Activated CD4-positive, alpha-beta memory T cell treated with anti-CD3 and anti-CD28 coated beads for 36 hours (primary cell): ENCODE measurements at regions of chr15 and their contacts with region 1.

Region 1: GRCh38 chr15:82985688-82986441 is at the start of gene RAMAC:
- DNase-seq: peak; percentile 95
- H3K4me3 Mint-ChIP-seq: peak within 1 kb of the TSS; percentile 98
- H3K27ac Mint-ChIP-seq: peak within 1 kb of the TSS; percentile 96
- H3K4me1 Mint-ChIP-seq: peaks cover 18% of the 10 kb centered on the region
- H3K27me3 Mint-ChIP-seq: no peaks in the 10 kb centered on the region
- total RNA-seq, gene RAMAC: 19.0 to 20.2 TPM

Region 2: DNA sequence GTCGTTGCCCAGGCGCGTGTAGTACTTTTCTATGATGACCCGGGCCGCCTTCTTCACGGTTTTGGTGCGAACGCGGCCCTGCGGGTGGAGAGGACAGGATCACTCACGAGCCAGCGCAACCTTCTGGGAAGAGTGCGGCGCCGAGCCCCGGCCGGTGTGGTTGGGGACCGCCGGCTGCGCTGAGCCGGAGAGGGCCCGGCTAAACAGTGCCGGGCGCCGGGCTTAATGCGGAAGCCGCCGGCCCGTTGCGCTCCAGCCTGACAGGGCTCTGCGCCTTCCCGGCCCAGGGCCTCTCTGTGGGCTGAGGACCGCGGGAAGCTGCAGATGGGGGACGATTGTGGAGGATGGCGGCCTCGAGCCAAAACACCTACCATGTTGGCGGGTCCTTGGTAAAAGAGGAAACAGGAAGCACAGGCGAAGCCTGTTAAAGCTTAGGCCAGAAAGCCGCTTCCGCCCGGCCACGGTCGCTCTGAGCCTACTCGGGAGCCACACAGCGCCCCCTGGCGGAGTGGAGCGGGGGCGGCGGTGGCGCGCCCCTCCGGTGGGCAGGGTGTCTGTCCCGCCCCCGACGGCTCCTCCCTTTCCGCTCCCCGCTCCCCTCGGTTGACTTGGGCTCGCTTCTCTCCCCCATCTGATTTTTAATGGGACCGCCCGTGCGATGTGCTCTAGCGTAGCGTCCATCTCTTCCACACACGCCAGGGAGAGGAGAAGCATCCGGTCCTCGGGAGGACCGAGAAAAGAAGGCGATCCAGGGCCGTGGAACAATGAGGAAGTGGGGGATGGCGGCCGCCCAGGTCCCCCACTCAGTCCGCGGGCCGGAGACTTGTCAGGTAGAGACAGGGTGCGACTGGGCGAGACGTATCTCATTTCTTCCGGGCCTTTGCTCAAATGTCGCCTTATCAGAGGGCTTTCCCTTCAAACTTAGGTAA is 445.5 kb before region 1 on chr15 and contains the start of gene RPS17:
- CTCF ChIA-PET with region 1: interaction called, 3 read pairs
- POLR2A ChIA-PET with region 1: interaction called, 7 read pairs
- intact Hi-C with region 1: loop called (anchors 1 kb)
- DNase-seq: peak; percentile 98
- H3K4me3 Mint-ChIP-seq: peak within 1 kb of the TSS; percentile 98
- H3K27ac Mint-ChIP-seq: peak within 1 kb of the TSS; percentile 88
- H3K4me1 Mint-ChIP-seq: peaks cover 27% of the 10 kb centered on the region
- H3K27me3 Mint-ChIP-seq: peaks cover 2% of the 10 kb centered on the region
- total RNA-seq, gene RPS17: 2,581 to 2,594 TPM

Region 3: GRCh38 chr15:82849556-82850512 is 136.0 kb before region 1 on chr15:
- CTCF ChIA-PET with region 1: interaction called, 17 read pairs
- POLR2A ChIA-PET with region 1: no interaction called
- intact Hi-C with region 1: no loop called
- DNase-seq: peak; percentile 64
- H3K4me3 Mint-ChIP-seq: no peak overlapping the region
- H3K27ac Mint-ChIP-seq: no peak overlapping the region
- H3K4me1 Mint-ChIP-seq: peaks cover 7% of the 10 kb centered on the region
- H3K27me3 Mint-ChIP-seq: no peaks in the 10 kb centered on the region

Region 4: GRCh38 chr15:82952158-82953081 is 33.4 kb before region 1 on chr15 and contains the start of gene HOMER2:
- CTCF ChIA-PET with region 1: interaction called, 3 read pairs
- POLR2A ChIA-PET with region 1: no interaction called
- intact Hi-C with region 1: loop called (anchors 2 kb)
- DNase-seq: peak; percentile 16
- H3K4me3 Mint-ChIP-seq: peak within 1 kb of the TSS; percentile 73
- H3K27ac Mint-ChIP-seq: no peak within 1 kb of the TSS
- H3K4me1 Mint-ChIP-seq: no peaks in the 10 kb centered on the region
- H3K27me3 Mint-ChIP-seq: peaks cover 8% of the 10 kb centered on the region
- total RNA-seq, gene HOMER2: 6.5 to 7.9 TPM

Region 5: GRCh38 chr15:83127648-83128047 is 141.8 kb after region 1 on chr15:
- CTCF ChIA-PET with region 1: no interaction called
- POLR2A ChIA-PET with region 1: no interaction called
- intact Hi-C with region 1: no loop called
- DNase-seq: no peak
- H3K4me3 Mint-ChIP-seq: no peak overlapping the region
- H3K27ac Mint-ChIP-seq: no peak overlapping the region
- H3K4me1 Mint-ChIP-seq: no peaks in the 10 kb centered on the region
- H3K27me3 Mint-ChIP-seq: no peaks in the 10 kb centered on the region